ENCODE measurements at regions of chr5 and their contacts with region 1.

Region 1: GRCh38 chr5:180831139-180832048 is 28.8 kb upstream of the MGAT1 start:
- DNase-seq: peak; percentile 87
- ATAC-seq: peak; percentile 83
- H3K4me3 ChIP-seq: peak overlapping the region; percentile 73 to 93 (median 77)
- H3K4me3 Mint-ChIP-seq: peak overlapping the region; percentile 98
- H3K27ac ChIP-seq: peak overlapping the region; percentile 93 to 96
- H3K27ac Mint-ChIP-seq: peak overlapping the region; percentile 98
- H3K4me1 ChIP-seq: peaks cover 35 to 52% of the 10 kb centered on the region in 2 donors
- H3K4me1 Mint-ChIP-seq: peaks cover 49% of the 10 kb centered on the region
- H3K27me3 ChIP-seq: no peaks in the 10 kb centered on the region
- H3K27me3 Mint-ChIP-seq: no peaks in the 10 kb centered on the region
- CTCF ChIP-seq: no peak

Region 2: GRCh38 chr5:180784497-180785097 is 46.8 kb before region 1 on chr5:
- CTCF ChIA-PET with region 1: interaction called, 22 read pairs
- POLR2A ChIA-PET with region 1: interaction called, 4 read pairs
- intact Hi-C with region 1: no loop called
- DNase-seq: peak; percentile 80
- ATAC-seq: peak; percentile 92
- H3K4me3 ChIP-seq: no peak overlapping the region
- H3K4me3 Mint-ChIP-seq: no peak overlapping the region
- H3K27ac ChIP-seq: no peak overlapping the region
- H3K27ac Mint-ChIP-seq: no peak overlapping the region
- H3K4me1 ChIP-seq: no peaks in the 10 kb centered on the region
- H3K4me1 Mint-ChIP-seq: peaks cover 12% of the 10 kb centered on the region
- H3K27me3 ChIP-seq: no peaks in the 10 kb centered on the region
- H3K27me3 Mint-ChIP-seq: no peaks in the 10 kb centered on the region
- CTCF ChIP-seq: peak; percentile 79

Region 3: DNA sequence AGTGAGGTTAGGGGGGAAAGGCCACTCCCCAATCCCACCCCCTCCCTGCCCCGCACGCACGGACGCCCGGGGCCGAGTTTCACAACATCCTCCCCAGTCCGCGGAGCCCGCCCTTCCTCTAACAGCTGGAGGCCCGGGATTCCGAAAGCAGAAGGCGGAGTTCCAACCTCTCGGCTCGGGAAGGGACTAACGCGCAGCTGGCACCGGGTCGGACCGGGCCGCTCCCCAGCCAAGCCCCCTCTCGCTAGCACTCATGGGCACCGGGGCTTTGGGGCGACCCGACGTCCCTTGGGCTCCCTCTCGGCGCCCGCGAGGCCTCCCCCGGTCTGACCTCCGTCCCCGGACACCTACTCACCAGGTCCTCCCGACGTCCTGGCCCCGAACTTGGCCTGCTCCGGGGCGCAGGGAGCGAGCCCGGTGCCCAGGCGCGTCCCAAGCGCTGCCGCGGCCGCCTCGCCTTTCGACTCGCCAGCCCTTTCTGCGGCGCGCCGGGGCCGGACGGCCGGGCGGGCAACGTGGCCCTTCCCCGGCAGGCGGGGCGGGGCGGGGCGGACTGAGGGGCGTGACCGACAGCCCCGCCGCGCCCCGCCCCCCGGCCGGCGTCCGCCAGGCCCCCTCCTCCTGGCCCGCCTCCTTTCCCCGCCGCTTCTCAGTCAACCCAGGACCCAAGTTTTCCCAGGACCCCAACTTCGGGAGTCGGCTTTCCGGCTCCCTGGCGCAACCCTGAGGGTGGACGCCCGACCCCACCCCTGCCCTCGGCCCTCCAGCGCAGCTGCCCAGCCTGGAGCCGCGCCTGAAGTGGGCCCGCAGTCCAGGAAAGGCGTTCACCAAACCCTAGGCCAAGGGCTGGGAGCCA is 28.8 kb before region 1 on chr5 and contains the start of gene MGAT1:
- CTCF ChIA-PET with region 1: interaction called, 12 read pairs
- POLR2A ChIA-PET with region 1: interaction called, 56 read pairs
- intact Hi-C with region 1: loop called (anchors 1 kb)
- DNase-seq: peak; percentile 82
- ATAC-seq: peak; percentile 65
- H3K4me3 ChIP-seq: peak within 1 kb of the TSS; percentile 82 to 96 (median 90)
- H3K4me3 Mint-ChIP-seq: peak within 1 kb of the TSS; percentile 96
- H3K27ac ChIP-seq: peak within 1 kb of the TSS; percentile 81 to 90
- H3K27ac Mint-ChIP-seq: peak within 1 kb of the TSS; percentile 87
- H3K4me1 ChIP-seq: peaks cover 80 to 83% of the 10 kb centered on the region in 2 donors
- H3K4me1 Mint-ChIP-seq: peaks cover 84% of the 10 kb centered on the region
- H3K27me3 ChIP-seq: no peaks in the 10 kb centered on the region
- H3K27me3 Mint-ChIP-seq: no peaks in the 10 kb centered on the region
- CTCF ChIP-seq: no peak
- total RNA-seq, gene MGAT1: 140 and 144 TPM in 2 replicates

Region 4: GRCh38 chr5:180816608-180817534 is 14.5 kb before region 1 on chr5:
- CTCF ChIA-PET with region 1: interaction called, 47 read pairs
- POLR2A ChIA-PET with region 1: interaction called, 79 read pairs
- intact Hi-C with region 1: no loop called
- DNase-seq: peak; percentile 35
- ATAC-seq: peak; percentile 22
- H3K4me3 ChIP-seq: peak overlapping the region in 1 of 5 experiments; percentile 4
- H3K4me3 Mint-ChIP-seq: peak overlapping the region; percentile 64
- H3K27ac ChIP-seq: no peak overlapping the region
- H3K27ac Mint-ChIP-seq: peak overlapping the region; percentile 46
- H3K4me1 ChIP-seq: peaks cover 43 to 53% of the 10 kb centered on the region in 2 donors
- H3K4me1 Mint-ChIP-seq: peaks cover 57% of the 10 kb centered on the region
- H3K27me3 ChIP-seq: no peaks in the 10 kb centered on the region
- H3K27me3 Mint-ChIP-seq: no peaks in the 10 kb centered on the region
- CTCF ChIP-seq: no peak

Region 5: GRCh38 chr5:180874804-180875582 is 43.6 kb after region 1 on chr5:
- CTCF ChIA-PET with region 1: no interaction called
- POLR2A ChIA-PET with region 1: no interaction called
- intact Hi-C with region 1: no loop called
- DNase-seq: no peak
- ATAC-seq: no peak
- H3K4me3 ChIP-seq: no peak overlapping the region
- H3K4me3 Mint-ChIP-seq: no peak overlapping the region
- H3K27ac ChIP-seq: no peak overlapping the region
- H3K27ac Mint-ChIP-seq: no peak overlapping the region
- H3K4me1 ChIP-seq: no peaks in the 10 kb centered on the region
- H3K4me1 Mint-ChIP-seq: peaks cover 2% of the 10 kb centered on the region
- H3K27me3 ChIP-seq: peaks cover 0 to 4% (median 0%) of the 10 kb centered on the region in 4 experiments
- H3K27me3 Mint-ChIP-seq: peaks cover 5% of the 10 kb centered on the region
- CTCF ChIP-seq: no peak

Measured in B cell (primary cell).